GM12878 (cell line): ENCODE measurements at regions of chr14 and their contacts with region 1.

Region 1: DNA sequence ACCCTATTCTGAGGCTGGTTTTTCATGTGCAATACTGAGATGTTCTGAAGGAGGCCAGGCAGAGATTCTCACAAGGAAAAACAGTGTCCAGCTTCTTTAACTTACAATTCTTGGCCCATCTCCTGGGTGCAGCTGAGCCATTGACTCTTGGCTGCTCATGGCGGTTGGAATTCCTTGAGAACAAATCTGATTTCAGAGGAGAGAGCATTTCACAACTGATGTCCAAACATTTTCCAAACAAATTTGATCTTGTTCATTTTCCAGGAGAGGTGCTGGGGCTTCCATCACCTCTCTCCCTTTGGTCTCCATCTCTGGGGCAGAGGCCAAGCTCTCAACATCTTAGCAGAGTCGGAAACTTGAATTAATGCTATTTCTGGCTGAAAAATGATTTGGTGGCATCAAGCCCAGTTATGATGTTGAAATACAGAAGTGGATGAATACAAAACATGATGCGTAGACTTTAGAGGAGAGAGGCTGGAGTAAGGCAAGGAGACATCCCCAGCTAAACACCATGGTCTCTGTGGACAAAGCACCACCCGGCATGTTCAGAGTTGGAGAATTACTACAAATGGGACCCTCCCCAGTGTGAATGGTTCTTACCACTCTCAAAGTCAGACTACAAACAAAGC is 593.0 kb downstream of the VRK1 start:
- DNase-seq: no peak
- ATAC-seq: no peak
- H3K4me3 ChIP-seq: no peak overlapping the region
- H3K27ac ChIP-seq: no peak overlapping the region
- H3K4me1 ChIP-seq: peaks cover 13% of the 10 kb centered on the region; the same call in 1 of the 2 replicates
- H3K27me3 ChIP-seq: no peaks in the 10 kb centered on the region
- CTCF ChIP-seq: no peak
- EP300 ChIP-seq: no peak
- POLR2A ChIP-seq: no peak
- RAD21 ChIP-seq: no peak

Region 2: DNA sequence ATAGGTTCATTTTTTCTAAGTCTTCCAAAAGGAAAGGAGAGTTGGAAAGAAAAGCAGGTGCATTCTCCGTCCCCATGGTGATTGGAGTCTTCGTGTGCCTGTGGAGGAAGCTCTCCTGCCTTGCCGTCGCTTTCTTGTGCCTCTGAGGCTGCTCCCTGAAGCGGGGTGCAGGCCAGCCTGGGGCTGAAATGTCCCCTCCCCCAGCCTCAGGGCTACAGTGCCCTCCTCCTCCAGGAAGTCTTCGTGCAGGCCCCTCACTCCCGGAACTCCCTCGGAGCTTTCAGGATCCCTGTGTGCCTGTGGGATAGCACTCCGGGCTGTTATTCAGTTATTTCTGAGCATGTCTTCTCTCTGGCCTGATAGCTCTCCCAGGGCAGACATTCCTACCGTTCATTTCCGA is 23.8 kb before region 1 on chr14:
- CTCF ChIA-PET with region 1: no interaction called
- POLR2A ChIA-PET with region 1: interaction called, 13 read pairs
- RAD21 ChIA-PET with region 1: interaction called, 5 read pairs
- SMC1A ChIA-PET with region 1: interaction called, 10 read pairs
- in situ Hi-C with region 1: no loop called
- intact Hi-C with region 1: no loop called
- DNase-seq: no peak
- ATAC-seq: no peak
- H3K4me3 ChIP-seq: no peak overlapping the region
- H3K27ac ChIP-seq: no peak overlapping the region
- H3K4me1 ChIP-seq: no peaks in the 10 kb centered on the region; the same call in 1 of the 2 replicates
- H3K27me3 ChIP-seq: no peaks in the 10 kb centered on the region
- CTCF ChIP-seq: no peak
- EP300 ChIP-seq: no peak
- POLR2A ChIP-seq: no peak
- RAD21 ChIP-seq: no peak

Region 3: GRCh38 chr14:97401714-97402113 is 11.5 kb after region 1 on chr14:
- CTCF ChIA-PET with region 1: interaction called, 5 read pairs
- POLR2A ChIA-PET with region 1: interaction called, 7 read pairs
- RAD21 ChIA-PET with region 1: interaction called, 83 read pairs
- SMC1A ChIA-PET with region 1: interaction called, 115 read pairs
- in situ Hi-C with region 1: no loop called
- intact Hi-C with region 1: no loop called
- DNase-seq: no peak
- ATAC-seq: peak; percentile 39; the same call in 2 of the 3 replicates
- H3K4me3 ChIP-seq: no peak overlapping the region
- H3K27ac ChIP-seq: no peak overlapping the region
- H3K4me1 ChIP-seq: peaks cover 4% of the 10 kb centered on the region; the same call in 1 of the 2 replicates
- H3K27me3 ChIP-seq: no peaks in the 10 kb centered on the region
- CTCF ChIP-seq: no peak
- EP300 ChIP-seq: no peak
- POLR2A ChIP-seq: no peak
- RAD21 ChIP-seq: no peak